WTC11 (cell line): ENCODE measurements at regions of chr1 and their contacts with region 1.

Region 1: DNA sequence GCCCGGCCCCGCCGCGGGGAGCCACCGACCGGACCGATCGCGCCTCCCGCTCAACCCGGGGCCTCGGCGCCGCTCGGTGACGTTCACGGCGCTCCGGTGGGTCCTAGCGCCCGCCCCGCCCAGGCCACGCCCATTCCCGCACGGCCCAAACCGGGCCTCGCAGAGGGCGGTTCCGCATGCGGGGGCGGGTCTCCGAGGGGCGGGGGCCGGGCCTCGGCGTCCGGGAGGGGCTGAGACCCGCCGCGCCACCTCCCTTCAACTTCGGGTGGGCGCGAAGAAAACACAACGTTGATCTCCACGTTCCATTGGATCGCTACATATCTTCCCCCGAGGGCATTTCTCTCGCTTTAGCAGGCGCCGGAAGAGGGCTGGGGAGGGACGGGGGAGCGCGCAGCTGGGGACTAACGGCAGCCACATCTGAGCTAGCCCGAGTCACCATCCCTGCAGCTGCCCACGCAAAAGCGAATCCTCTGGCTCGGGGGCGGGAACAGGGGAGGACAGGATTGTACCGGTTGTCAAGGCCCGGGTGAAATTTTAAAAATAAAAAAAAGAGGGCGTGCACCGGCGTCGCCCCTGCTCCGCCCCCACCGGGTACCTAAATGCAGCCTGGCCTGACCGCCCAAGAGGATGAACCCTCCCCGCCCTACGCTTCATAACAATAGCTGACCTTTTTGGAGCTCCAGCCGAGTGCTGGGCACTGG is at the start of gene MAD2L2:
- DNase-seq: peak; percentile 86
- ATAC-seq: peak; percentile 54
- H3K4me3 Mint-ChIP-seq: peak within 1 kb of the TSS; percentile 83
- H3K27ac Mint-ChIP-seq: peak within 1 kb of the TSS; percentile 100
- H3K4me1 Mint-ChIP-seq: peaks cover 61% of the 10 kb centered on the region
- H3K27me3 Mint-ChIP-seq: no peaks in the 10 kb centered on the region
- CTCF ChIP-seq: no peak
- total RNA-seq, gene MAD2L2: 283 to 312 TPM (median 305 TPM) in 3 replicates

Region 2: GRCh38 chr1:11600836-11601235 is 80.4 kb before region 1 on chr1:
- CTCF ChIA-PET with region 1: no interaction called
- POLR2A ChIA-PET with region 1: no interaction called
- DNase-seq: no peak
- ATAC-seq: no peak
- H3K4me3 Mint-ChIP-seq: no peak overlapping the region
- H3K27ac Mint-ChIP-seq: no peak overlapping the region
- H3K4me1 Mint-ChIP-seq: peaks cover 10% of the 10 kb centered on the region
- H3K27me3 Mint-ChIP-seq: no peaks in the 10 kb centered on the region
- CTCF ChIP-seq: no peak

Region 3: GRCh38 chr1:11611638-11612327 is 69.4 kb before region 1 on chr1:
- CTCF ChIA-PET with region 1: no interaction called
- POLR2A ChIA-PET with region 1: no interaction called
- DNase-seq: no peak
- ATAC-seq: peak; percentile 75
- H3K4me3 Mint-ChIP-seq: no peak overlapping the region
- H3K27ac Mint-ChIP-seq: no peak overlapping the region
- H3K4me1 Mint-ChIP-seq: no peaks in the 10 kb centered on the region
- H3K27me3 Mint-ChIP-seq: peaks cover 2% of the 10 kb centered on the region
- CTCF ChIP-seq: no peak

Region 4: GRCh38 chr1:11654137-11654938 is 26.9 kb before region 1 on chr1 and contains the starts of genes FBXO2 and FBXO44:
- CTCF ChIA-PET with region 1: interaction called, 16 read pairs
- POLR2A ChIA-PET with region 1: interaction called, 14 read pairs
- DNase-seq: peak; percentile 88
- ATAC-seq: peak; percentile 69
- H3K4me3 Mint-ChIP-seq: peak within 1 kb of the TSS; percentile 74
- H3K27ac Mint-ChIP-seq: no peak within 1 kb of the TSS
- H3K4me1 Mint-ChIP-seq: peaks cover 33% of the 10 kb centered on the region
- H3K27me3 Mint-ChIP-seq: peaks cover 22% of the 10 kb centered on the region
- CTCF ChIP-seq: no peak
- total RNA-seq, gene FBXO2: 58.2 to 68.2 TPM (median 63.7 TPM) in 3 replicates
- total RNA-seq, gene FBXO44: 34.9 to 45.6 TPM (median 40.6 TPM) in 3 replicates

Region 5: GRCh38 chr1:11661103-11661502 is 20.1 kb before region 1 on chr1:
- CTCF ChIA-PET with region 1: interaction called, 33 read pairs
- POLR2A ChIA-PET with region 1: interaction called, 16 read pairs
- DNase-seq: no peak
- ATAC-seq: no peak
- H3K4me3 Mint-ChIP-seq: no peak overlapping the region
- H3K27ac Mint-ChIP-seq: no peak overlapping the region
- H3K4me1 Mint-ChIP-seq: no peaks in the 10 kb centered on the region
- H3K27me3 Mint-ChIP-seq: no peaks in the 10 kb centered on the region; the same call in 1 of the 2 replicates
- CTCF ChIP-seq: no peak

Region 6: GRCh38 chr1:11693024-11693590 is 11.9 kb after region 1 on chr1:
- CTCF ChIA-PET with region 1: interaction called, 21 read pairs
- POLR2A ChIA-PET with region 1: interaction called, 52 read pairs
- DNase-seq: no peak
- ATAC-seq: no peak
- H3K4me3 Mint-ChIP-seq: peak overlapping the region; percentile 89
- H3K27ac Mint-ChIP-seq: 0 out of 2 replicates have a peak overlapping the region, but pooled peaks have one; percentile 0
- H3K4me1 Mint-ChIP-seq: peaks cover 55% of the 10 kb centered on the region
- H3K27me3 Mint-ChIP-seq: no peaks in the 10 kb centered on the region
- CTCF ChIP-seq: no peak

Region 7: GRCh38 chr1:11700601-11701467 is 19.6 kb after region 1 on chr1:
- CTCF ChIA-PET with region 1: interaction called, 11 read pairs
- POLR2A ChIA-PET with region 1: interaction called, 5 read pairs
- DNase-seq: peak; percentile 42
- ATAC-seq: no peak
- H3K4me3 Mint-ChIP-seq: 0 out of 2 replicates have a peak overlapping the region, but pooled peaks have one; percentile 7
- H3K27ac Mint-ChIP-seq: no peak overlapping the region
- H3K4me1 Mint-ChIP-seq: peaks cover 51% of the 10 kb centered on the region
- H3K27me3 Mint-ChIP-seq: no peaks in the 10 kb centered on the region
- CTCF ChIP-seq: no peak